ENCODE measurements at regions of chr1 and their contacts with region 1.

Region 1: GRCh38 chr1:153677718-153678505 is 576 bp upstream of the NPR1 start:
- DNase-seq: peak; percentile 55 to 82
- H3K4me3 ChIP-seq: peak overlapping the region; percentile 68 to 76
- H3K27ac ChIP-seq: peak overlapping the region; percentile 84 to 86
- H3K4me1 ChIP-seq: peaks cover 0 to 32% (median 15%) of the 10 kb centered on the region in 4 donors
- H3K27me3 ChIP-seq: no peaks in the 10 kb centered on the region
- CTCF ChIP-seq: peak; percentile 88 to 93

Region 2: DNA sequence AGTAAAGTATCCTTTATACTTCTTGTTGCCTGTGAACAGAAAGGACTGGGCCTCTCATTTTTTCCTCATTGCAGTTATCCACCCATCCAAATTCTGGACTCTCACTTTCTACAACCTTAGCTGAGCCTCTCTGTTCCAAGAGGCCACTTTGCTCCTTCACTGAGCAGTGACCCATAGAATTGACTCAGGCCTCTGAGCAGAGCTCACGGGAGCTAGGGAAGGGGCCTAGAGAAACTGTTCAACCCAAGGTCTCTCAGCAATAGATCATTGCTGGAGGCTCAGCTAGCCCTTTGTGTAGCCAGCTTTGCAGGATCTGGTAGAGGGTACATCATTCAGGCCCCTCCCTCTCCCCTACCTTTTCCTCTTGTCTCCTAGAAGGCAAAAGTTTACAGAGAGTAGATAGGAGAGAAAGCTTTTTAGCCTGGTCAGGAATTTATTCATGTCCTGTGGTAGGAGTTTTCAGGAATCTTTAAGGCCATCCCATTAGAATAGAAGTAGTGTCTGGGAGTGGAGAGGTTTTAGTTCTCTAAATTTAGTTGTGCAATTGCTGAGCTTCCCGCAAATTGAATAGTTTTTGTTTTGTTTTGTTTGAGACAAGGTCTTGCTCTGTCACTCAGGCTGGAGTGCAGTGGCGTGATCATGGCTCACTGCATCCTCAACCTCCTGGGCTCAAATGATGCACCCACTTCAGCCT is 56.6 kb after region 1 on chr1:
- intact Hi-C with region 1: no loop called
- DNase-seq: no peak
- H3K4me3 ChIP-seq: no peak overlapping the region
- H3K27ac ChIP-seq: peak overlapping the region; percentile 27 to 30
- H3K4me1 ChIP-seq: peaks cover 0 to 55% (median 28%) of the 10 kb centered on the region in 4 donors
- H3K27me3 ChIP-seq: no peaks in the 10 kb centered on the region
- CTCF ChIP-seq: no peak

Region 3: DNA sequence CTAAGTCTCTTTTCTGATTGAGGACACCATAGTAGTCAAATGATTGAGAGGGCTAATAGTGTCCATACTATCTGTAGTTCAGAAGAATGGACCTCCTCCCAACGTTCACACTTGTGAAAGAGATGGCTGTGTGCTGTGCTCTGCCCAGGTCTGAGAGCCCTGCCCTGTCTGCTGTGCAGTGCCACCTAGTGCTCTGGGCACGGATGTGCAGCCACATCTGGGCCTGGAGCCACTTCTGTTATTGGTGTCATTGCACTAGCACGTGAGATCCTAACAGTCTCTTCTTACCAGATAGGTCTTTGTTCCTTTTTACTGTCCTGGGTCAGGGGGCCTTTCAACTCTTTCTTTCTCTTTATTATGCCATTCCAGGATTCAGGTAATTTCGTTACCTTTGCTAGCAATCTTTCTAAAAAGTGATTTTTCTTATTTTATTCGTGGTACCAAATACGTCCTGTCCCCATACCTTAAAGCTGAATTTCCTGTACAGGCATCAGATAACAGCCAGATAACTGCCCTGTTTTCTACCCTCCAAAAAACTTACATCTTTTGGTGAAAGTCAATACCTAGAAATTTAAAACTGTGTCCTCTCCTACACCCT is 71.6 kb after region 1 on chr1:
- intact Hi-C with region 1: loop called (anchors 5 kb)
- DNase-seq: peak; percentile 92 to 96
- H3K4me3 ChIP-seq: no peak overlapping the region
- H3K27ac ChIP-seq: peak overlapping the region; percentile 81 to 85
- H3K4me1 ChIP-seq: peaks cover 0 to 73% (median 33%) of the 10 kb centered on the region in 4 donors
- H3K27me3 ChIP-seq: no peaks in the 10 kb centered on the region
- CTCF ChIP-seq: peak; percentile 93 to 96

Region 4: DNA sequence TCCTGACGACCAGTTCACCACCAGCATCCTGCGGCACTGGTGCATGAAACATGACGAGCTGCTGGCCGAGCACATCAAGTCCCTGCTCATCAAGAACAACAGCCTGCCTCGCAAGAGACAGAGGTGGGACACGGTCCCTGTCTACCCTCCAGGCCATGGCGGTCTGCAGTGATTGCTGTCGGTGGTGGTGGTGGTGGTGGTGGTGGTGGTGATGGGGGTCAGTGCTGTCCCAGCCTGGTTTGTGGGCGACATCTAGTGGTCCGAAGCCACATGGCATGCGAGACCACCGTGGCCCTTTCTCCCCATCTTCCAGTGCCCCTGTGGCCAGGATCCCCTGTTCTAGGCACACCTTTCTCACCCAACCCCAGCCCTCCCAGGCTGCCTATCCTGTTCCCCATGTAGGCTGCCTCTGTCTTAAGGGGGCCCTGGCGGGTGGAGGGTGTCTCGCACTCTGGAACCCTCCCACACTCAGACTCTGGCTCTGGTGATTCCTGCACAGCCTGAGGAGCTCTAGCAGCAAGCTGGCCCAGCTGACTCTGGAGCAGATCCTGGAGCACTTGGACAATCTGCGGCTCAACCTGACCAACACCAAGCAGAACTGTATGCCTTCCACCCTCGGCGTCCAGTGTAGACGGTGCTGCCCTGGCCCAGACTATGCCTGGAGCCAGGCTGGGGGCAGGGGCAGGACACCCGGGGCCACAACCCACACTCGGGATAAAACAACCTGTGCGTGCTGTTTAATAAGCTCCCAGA is 94.1 kb after region 1 on chr1:
- intact Hi-C with region 1: loop called (anchors 2 kb)
- DNase-seq: peak in 1 of 2 donors; percentile 50
- H3K4me3 ChIP-seq: no peak overlapping the region
- H3K27ac ChIP-seq: peak overlapping the region; percentile 91 to 93
- H3K4me1 ChIP-seq: peaks cover 0 to 37% (median 24%) of the 10 kb centered on the region in 4 donors
- H3K27me3 ChIP-seq: no peaks in the 10 kb centered on the region
- CTCF ChIP-seq: peak; percentile 49 to 53